Naive thymus-derived CD4-positive, alpha-beta T cell (primary cell): ENCODE measurements at regions of chr6 and their contacts with region 1.

Region 1: DNA sequence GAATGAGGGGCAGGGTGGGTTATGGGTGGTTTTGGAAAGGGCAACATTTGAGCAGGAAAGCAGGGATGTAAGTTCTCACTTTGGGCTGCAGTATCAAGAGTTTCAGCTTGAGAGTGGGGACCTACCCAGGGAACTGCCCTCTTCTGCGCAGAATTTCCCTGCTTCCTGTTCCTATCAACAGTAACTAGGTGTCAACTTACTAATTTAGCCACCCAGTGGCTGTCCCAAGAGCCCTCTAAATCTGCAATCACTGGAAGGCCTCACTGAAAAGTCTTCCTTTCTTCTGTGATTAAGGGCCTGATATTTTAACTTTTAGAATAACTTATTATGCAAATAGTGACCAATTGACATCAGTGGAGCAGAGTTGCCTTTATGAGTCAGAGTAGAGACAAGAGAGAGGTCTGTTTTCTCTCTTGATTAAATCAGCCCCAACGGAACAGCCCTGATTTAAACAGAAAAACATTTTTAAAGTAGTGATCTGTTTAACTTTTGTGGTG is 118.2 kb upstream of the RIPOR2 start:
- DNase-seq: no peak
- ATAC-seq: no peak
- H3K4me3 ChIP-seq: no peak overlapping the region
- H3K4me3 Mint-ChIP-seq: no peak overlapping the region
- H3K27ac ChIP-seq: no peak overlapping the region
- H3K27ac Mint-ChIP-seq: peak overlapping the region in 1 of 9 donors; percentile 59
- H3K4me1 ChIP-seq: peaks cover 36 to 59% of the 10 kb centered on the region in 2 donors
- H3K4me1 Mint-ChIP-seq: peaks cover 39 to 80% (median 65%) of the 10 kb centered on the region in 7 donors
- H3K27me3 ChIP-seq: no peaks in the 10 kb centered on the region
- H3K27me3 Mint-ChIP-seq: no peaks in the 10 kb centered on the region

Region 2: GRCh38 chr6:25035527-25036435 is 18.1 kb before region 1 on chr6:
- CTCF ChIA-PET with region 1: interaction called, 3 read pairs
- POLR2A ChIA-PET with region 1: interaction called, 12 read pairs
- intact Hi-C with region 1: loop called (anchors 1 to 2 kb)
- DNase-seq: no peak
- ATAC-seq: peak; percentile 76
- H3K4me3 ChIP-seq: peak overlapping the region; percentile 56
- H3K4me3 Mint-ChIP-seq: peak overlapping the region; percentile 73 to 92 (median 83)
- H3K27ac ChIP-seq: peak overlapping the region; percentile 54
- H3K27ac Mint-ChIP-seq: peak overlapping the region; percentile 71 to 93 (median 83)
- H3K4me1 ChIP-seq: peaks cover 33 to 46% of the 10 kb centered on the region in 2 donors
- H3K4me1 Mint-ChIP-seq: peaks cover 46 to 70% (median 66%) of the 10 kb centered on the region in 7 donors
- H3K27me3 ChIP-seq: no peaks in the 10 kb centered on the region
- H3K27me3 Mint-ChIP-seq: no peaks in the 10 kb centered on the region

Region 3: DNA sequence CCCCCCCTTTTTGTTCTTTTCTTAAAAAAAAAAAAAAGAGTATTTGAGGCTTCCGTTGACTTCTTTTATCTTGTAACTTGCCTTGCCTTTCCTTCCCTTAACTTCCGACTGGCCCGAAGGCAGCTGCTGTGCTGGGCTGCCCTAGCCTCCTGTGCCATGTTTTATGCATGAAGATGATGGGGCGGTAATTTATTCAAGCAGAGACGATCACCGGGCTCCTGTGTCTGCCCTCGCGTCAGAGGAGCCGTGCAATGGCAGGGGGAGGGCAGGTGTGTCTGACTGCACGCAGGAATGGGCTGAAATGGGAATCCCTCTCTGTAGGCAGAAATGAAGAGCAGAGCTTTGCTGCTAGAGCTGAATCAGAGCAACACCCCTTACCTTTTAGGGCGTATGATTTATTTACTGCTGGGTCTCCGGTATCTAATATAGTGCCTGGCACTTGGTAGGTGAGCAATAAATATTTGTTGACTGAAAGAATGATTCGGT is 11.8 kb before region 1 on chr6:
- CTCF ChIA-PET with region 1: interaction called, 3 read pairs
- POLR2A ChIA-PET with region 1: interaction called, 12 read pairs
- intact Hi-C with region 1: loop called (anchors 1 kb)
- DNase-seq: peak in 7 of 9 donors; percentile 45 to 67 (median 49)
- ATAC-seq: peak; percentile 73
- H3K4me3 ChIP-seq: peak overlapping the region; percentile 60
- H3K4me3 Mint-ChIP-seq: peak overlapping the region; percentile 88 to 97 (median 92)
- H3K27ac ChIP-seq: peak overlapping the region; percentile 64
- H3K27ac Mint-ChIP-seq: peak overlapping the region; percentile 71 to 98 (median 90)
- H3K4me1 ChIP-seq: peaks cover 35 to 51% of the 10 kb centered on the region in 2 donors
- H3K4me1 Mint-ChIP-seq: peaks cover 38 to 62% (median 56%) of the 10 kb centered on the region in 7 donors
- H3K27me3 ChIP-seq: no peaks in the 10 kb centered on the region
- H3K27me3 Mint-ChIP-seq: peaks cover 0 to 3% (median 0%) of the 10 kb centered on the region in 5 donors

Region 4: GRCh38 chr6:25070547-25071366 is 16.8 kb after region 1 on chr6:
- CTCF ChIA-PET with region 1: interaction called, 6 read pairs
- POLR2A ChIA-PET with region 1: no interaction called
- intact Hi-C with region 1: loop called (anchors 1 kb)
- DNase-seq: peak; percentile 54 to 85 (median 79)
- ATAC-seq: peak; percentile 99
- H3K4me3 ChIP-seq: no peak overlapping the region
- H3K4me3 Mint-ChIP-seq: peak overlapping the region in 8 of 10 donors; percentile 10 to 70 (median 50)
- H3K27ac ChIP-seq: no peak overlapping the region
- H3K27ac Mint-ChIP-seq: peak overlapping the region; percentile 43 to 92 (median 83)
- H3K4me1 ChIP-seq: peaks cover 0 to 3% of the 10 kb centered on the region in 2 donors
- H3K4me1 Mint-ChIP-seq: peaks cover 5 to 15% (median 9%) of the 10 kb centered on the region in 7 donors
- H3K27me3 ChIP-seq: no peaks in the 10 kb centered on the region
- H3K27me3 Mint-ChIP-seq: peaks cover 0 to 7% (median 0%) of the 10 kb centered on the region in 5 donors

Region 5: DNA sequence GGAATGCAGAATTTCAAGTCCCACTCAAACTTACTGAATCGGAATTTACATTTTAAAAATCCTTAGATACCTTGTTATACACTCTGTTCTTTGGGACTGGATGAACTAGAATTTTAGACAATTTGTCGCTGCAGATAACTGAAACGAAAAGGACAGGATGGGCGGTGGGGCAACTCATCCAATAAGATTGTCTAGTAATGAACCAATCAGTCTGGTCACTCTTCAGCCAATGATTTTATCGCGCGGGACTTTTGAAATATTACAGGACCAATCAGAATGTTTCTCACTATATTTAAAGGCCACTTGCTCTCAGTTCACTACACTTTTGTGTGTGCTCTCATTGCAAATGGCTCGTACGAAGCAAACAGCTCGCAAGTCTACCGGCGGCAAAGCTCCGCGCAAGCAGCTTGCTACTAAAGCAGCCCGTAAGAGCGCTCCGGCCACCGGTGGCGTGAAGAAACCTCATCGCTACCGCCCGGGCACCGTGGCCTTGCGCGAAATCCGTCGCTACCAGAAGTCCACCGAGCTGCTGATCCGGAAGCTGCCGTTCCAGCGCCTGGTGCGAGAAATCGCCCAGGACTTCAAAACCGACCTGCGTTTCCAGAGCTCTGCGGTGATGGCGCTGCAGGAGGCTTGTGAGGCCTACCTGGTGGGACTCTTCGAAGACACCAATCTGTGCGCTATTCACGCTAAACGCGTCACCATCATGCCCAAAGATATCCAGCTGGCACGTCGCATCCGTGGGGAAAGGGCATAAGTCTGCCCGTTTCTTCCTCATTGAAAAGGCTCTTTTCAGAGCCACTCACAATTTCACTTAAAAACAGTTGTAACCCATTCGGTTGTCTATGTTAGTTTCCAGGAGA is 991.4 kb after region 1 on chr6:
- CTCF ChIA-PET with region 1: no interaction called
- POLR2A ChIA-PET with region 1: no interaction called
- intact Hi-C with region 1: no loop called
- DNase-seq: peak; percentile 39 to 93 (median 89)
- ATAC-seq: peak; percentile 68
- H3K4me3 ChIP-seq: peak overlapping the region; percentile 91
- H3K4me3 Mint-ChIP-seq: peak overlapping the region; percentile 87 to 98 (median 94)
- H3K27ac ChIP-seq: peak overlapping the region; percentile 90
- H3K27ac Mint-ChIP-seq: peak overlapping the region; percentile 80 to 98 (median 95)
- H3K4me1 ChIP-seq: peaks cover 7 to 19% of the 10 kb centered on the region in 2 donors
- H3K4me1 Mint-ChIP-seq: peaks cover 8 to 51% (median 20%) of the 10 kb centered on the region in 7 donors
- H3K27me3 ChIP-seq: no peaks in the 10 kb centered on the region
- H3K27me3 Mint-ChIP-seq: peaks cover 0 to 3% (median 0%) of the 10 kb centered on the region in 5 donors